Right cardiac atrium (tissue), 5 donors: ENCODE measurements at regions of chr4 and their contacts with region 1.

Region 1: GRCh38 chr4:158768555-158769174 is at the start of gene FNIP2:
- DNase-seq: peak; percentile 86 to 95 (median 94)
- ATAC-seq: peak; percentile 96 to 97
- H3K4me3 ChIP-seq: peak within 1 kb of the TSS; percentile 96
- H3K27ac ChIP-seq: peak within 1 kb of the TSS; percentile 92
- H3K4me1 ChIP-seq: peaks cover 4% of the 10 kb centered on the region
- H3K27me3 ChIP-seq: no peaks in the 10 kb centered on the region
- total RNA-seq, gene FNIP2: 37.0 to 59.5 (median 48.3) TPM

Region 2: DNA sequence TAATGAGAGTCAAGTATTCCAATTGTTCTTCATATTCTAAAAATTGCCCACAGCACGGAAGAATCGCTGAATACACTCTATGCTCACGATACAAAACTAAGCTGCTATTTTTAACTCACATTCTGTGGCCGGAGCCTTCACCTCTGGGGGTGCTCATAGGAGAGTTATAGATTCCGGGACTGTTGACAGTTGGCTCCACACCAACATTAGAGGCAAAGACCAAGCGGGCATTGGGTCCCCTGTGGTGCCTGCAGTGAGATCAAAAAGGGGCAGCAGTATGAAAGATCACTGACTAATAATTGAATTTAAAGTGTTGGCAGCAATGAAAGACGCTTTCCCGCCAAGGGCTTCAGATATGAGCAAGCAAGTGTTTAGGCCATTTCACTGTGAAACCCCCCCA is 412.4 kb before region 1 on chr4:
- intact Hi-C with region 1: no loop called
- DNase-seq: no peak
- ATAC-seq: no peak
- H3K4me3 ChIP-seq: no peak overlapping the region
- H3K27ac ChIP-seq: no peak overlapping the region
- H3K4me1 ChIP-seq: no peaks in the 10 kb centered on the region
- H3K27me3 ChIP-seq: no peaks in the 10 kb centered on the region

Region 3: GRCh38 chr4:158809611-158810486 is 41.2 kb after region 1 on chr4:
- intact Hi-C with region 1: loop called in 1 of 4 experiments (anchors 5 kb)
- DNase-seq: no peak
- ATAC-seq: peak; percentile 52 to 54
- H3K4me3 ChIP-seq: no peak overlapping the region
- H3K27ac ChIP-seq: peak overlapping the region; percentile 78
- H3K4me1 ChIP-seq: peaks cover 17% of the 10 kb centered on the region
- H3K27me3 ChIP-seq: no peaks in the 10 kb centered on the region

Region 4: GRCh38 chr4:158845311-158846041 is 76.8 kb after region 1 on chr4:
- intact Hi-C with region 1: loop called in 2 of 4 experiments (anchors 5 to 10 kb)
- DNase-seq: no peak
- ATAC-seq: no peak
- H3K4me3 ChIP-seq: no peak overlapping the region
- H3K27ac ChIP-seq: no peak overlapping the region
- H3K4me1 ChIP-seq: peaks cover 5% of the 10 kb centered on the region
- H3K27me3 ChIP-seq: no peaks in the 10 kb centered on the region